ENCODE measurements at regions of chr3 and their contacts with region 1.

Region 1: DNA sequence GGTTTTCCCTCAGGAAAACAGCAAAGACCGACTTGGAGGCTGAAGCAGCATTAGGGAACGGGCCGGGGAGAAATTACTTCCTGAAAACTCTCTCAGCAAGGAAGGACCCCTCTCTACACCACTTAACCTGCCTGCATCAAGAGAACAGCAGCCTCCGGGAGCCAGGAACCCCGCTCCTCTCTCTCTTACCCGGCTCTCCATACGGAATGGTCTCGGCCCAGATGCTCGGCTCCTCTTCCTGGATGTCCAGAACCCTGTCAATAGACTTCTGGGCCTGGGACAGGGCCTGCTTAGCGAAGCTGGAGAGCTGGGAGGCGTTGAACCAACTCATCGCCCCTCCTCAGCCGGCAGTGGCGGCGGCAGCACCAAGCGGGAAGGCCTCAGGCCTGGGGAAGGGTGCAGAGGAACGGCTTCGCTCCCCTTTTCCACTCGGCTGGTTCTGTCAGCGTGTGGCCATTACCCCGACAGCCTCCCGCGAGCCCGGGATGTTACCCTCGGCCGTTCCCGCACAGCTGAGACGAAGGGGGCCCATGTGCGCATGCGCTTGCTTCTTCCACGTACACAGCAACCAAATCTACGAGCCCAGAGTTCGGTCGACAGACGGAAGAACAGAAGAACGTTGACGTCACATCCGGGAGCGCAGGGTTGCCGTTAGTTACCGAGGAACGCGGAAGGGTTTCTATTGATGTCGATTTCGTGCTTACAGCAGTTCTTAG is at the start of gene TMF1:
- DNase-seq: peak; percentile 96 to 99 (median 98)
- H3K4me3 ChIP-seq: peak within 1 kb of the TSS; percentile 82 to 98
- H3K4me3 Mint-ChIP-seq: peak within 1 kb of the TSS; percentile 94 to 99 (median 98)
- H3K27ac ChIP-seq: peak within 1 kb of the TSS; percentile 96
- H3K27ac Mint-ChIP-seq: peak within 1 kb of the TSS; percentile 97 to 100 (median 99)
- H3K4me1 ChIP-seq: peaks cover 49% of the 10 kb centered on the region
- H3K4me1 Mint-ChIP-seq: peaks cover 32 to 62% (median 41%) of the 10 kb centered on the region in 4 donors
- H3K27me3 ChIP-seq: no peaks in the 10 kb centered on the region
- H3K27me3 Mint-ChIP-seq: no peaks in the 10 kb centered on the region
- total RNA-seq, gene TMF1: 58.5 to 61.0 TPM

Region 2: GRCh38 chr3:69013253-69014021 is 38.5 kb before region 1 on chr3 and contains the start of gene EOGT:
- CTCF ChIA-PET with region 1: interaction called, 10 read pairs
- POLR2A ChIA-PET with region 1: interaction called, 10 read pairs
- intact Hi-C with region 1: loop called (anchors 1 kb)
- DNase-seq: peak; percentile 68 to 84 (median 72)
- H3K4me3 ChIP-seq: peak within 1 kb of the TSS; percentile 46 to 64
- H3K4me3 Mint-ChIP-seq: peak within 1 kb of the TSS; percentile 87 to 98 (median 92)
- H3K27ac ChIP-seq: peak within 1 kb of the TSS; percentile 63
- H3K27ac Mint-ChIP-seq: peak within 1 kb of the TSS; percentile 73 to 97 (median 90)
- H3K4me1 ChIP-seq: peaks cover 26% of the 10 kb centered on the region
- H3K4me1 Mint-ChIP-seq: peaks cover 16 to 43% (median 29%) of the 10 kb centered on the region in 4 donors
- H3K27me3 ChIP-seq: no peaks in the 10 kb centered on the region
- H3K27me3 Mint-ChIP-seq: no peaks in the 10 kb centered on the region
- total RNA-seq, gene EOGT: 26.7 to 28.6 TPM

Region 3: DNA sequence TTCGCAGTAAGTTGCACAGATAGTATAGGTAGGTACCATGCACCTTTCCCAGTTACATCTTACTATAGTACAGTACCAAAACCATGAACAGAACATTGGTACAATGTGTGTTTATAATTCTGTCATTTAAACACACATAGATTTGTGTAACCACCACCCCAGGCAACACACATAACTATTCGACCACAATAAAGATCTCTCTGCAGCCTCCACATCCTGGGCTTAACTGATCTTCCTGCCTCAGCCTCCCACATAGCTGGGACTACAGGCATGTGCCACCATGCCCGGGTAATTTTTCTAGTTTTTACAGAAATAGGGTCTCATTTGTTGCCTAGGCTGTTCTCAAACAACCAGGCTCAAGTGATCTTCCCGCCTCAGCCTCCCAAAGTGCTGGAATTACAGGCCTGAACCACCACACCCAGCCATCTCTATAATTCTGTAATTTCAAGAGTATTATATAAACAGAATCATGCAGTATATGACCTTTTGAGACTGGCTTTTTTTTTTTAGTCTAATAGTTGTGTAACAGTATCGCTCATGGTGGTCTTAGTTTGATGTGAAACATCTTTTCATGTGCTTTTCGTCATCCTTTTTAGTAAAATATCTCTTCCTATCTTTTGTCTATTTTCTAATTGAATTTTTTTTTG is 13.5 kb after region 1 on chr3:
- CTCF ChIA-PET with region 1: interaction called, 3 read pairs
- POLR2A ChIA-PET with region 1: interaction called, 55 read pairs
- intact Hi-C with region 1: loop called (anchors 1 kb)
- DNase-seq: peak in 4 of 5 donors; percentile 48 to 56 (median 52)
- H3K4me3 ChIP-seq: no peak overlapping the region
- H3K4me3 Mint-ChIP-seq: peak overlapping the region in 7 of 8 donors; percentile 6 to 83 (median 75)
- H3K27ac ChIP-seq: peak overlapping the region; percentile 27
- H3K27ac Mint-ChIP-seq: peak overlapping the region; percentile 41 to 94 (median 86)
- H3K4me1 ChIP-seq: peaks cover 43% of the 10 kb centered on the region
- H3K4me1 Mint-ChIP-seq: peaks cover 26 to 53% (median 36%) of the 10 kb centered on the region in 4 donors
- H3K27me3 ChIP-seq: no peaks in the 10 kb centered on the region
- H3K27me3 Mint-ChIP-seq: no peaks in the 10 kb centered on the region

Region 4: GRCh38 chr3:69097407-69098086 is 45.6 kb after region 1 on chr3:
- CTCF ChIA-PET with region 1: interaction called, 6 read pairs
- POLR2A ChIA-PET with region 1: interaction called, 287 read pairs
- intact Hi-C with region 1: no loop called
- DNase-seq: no peak
- H3K4me3 ChIP-seq: no peak overlapping the region
- H3K4me3 Mint-ChIP-seq: peak overlapping the region; percentile 11 to 74 (median 48)
- H3K27ac ChIP-seq: no peak overlapping the region
- H3K27ac Mint-ChIP-seq: peak overlapping the region; percentile 57 to 97 (median 88)
- H3K4me1 ChIP-seq: peaks cover 86% of the 10 kb centered on the region
- H3K4me1 Mint-ChIP-seq: peaks cover 52 to 93% (median 71%) of the 10 kb centered on the region in 4 donors
- H3K27me3 ChIP-seq: no peaks in the 10 kb centered on the region
- H3K27me3 Mint-ChIP-seq: no peaks in the 10 kb centered on the region

Region 5: GRCh38 chr3:69200384-69201068 is 148.6 kb after region 1 on chr3:
- CTCF ChIA-PET with region 1: no interaction called
- POLR2A ChIA-PET with region 1: interaction called, 3 read pairs
- intact Hi-C with region 1: loop called (anchors 2 kb)
- DNase-seq: peak; percentile 20 to 47 (median 27)
- H3K4me3 ChIP-seq: peak overlapping the region; percentile 82 to 94
- H3K4me3 Mint-ChIP-seq: peak overlapping the region; percentile 92 to 97 (median 96)
- H3K27ac ChIP-seq: peak overlapping the region; percentile 79
- H3K27ac Mint-ChIP-seq: peak overlapping the region; percentile 94 to 98 (median 97)
- H3K4me1 ChIP-seq: peaks cover 28% of the 10 kb centered on the region
- H3K4me1 Mint-ChIP-seq: peaks cover 29 to 64% (median 43%) of the 10 kb centered on the region in 4 donors
- H3K27me3 ChIP-seq: no peaks in the 10 kb centered on the region
- H3K27me3 Mint-ChIP-seq: no peaks in the 10 kb centered on the region

Measured in CD4-positive, alpha-beta memory T cell (primary cell).